ENCODE measurements at regions of chr16 and their contacts with region 1.

Region 1: DNA sequence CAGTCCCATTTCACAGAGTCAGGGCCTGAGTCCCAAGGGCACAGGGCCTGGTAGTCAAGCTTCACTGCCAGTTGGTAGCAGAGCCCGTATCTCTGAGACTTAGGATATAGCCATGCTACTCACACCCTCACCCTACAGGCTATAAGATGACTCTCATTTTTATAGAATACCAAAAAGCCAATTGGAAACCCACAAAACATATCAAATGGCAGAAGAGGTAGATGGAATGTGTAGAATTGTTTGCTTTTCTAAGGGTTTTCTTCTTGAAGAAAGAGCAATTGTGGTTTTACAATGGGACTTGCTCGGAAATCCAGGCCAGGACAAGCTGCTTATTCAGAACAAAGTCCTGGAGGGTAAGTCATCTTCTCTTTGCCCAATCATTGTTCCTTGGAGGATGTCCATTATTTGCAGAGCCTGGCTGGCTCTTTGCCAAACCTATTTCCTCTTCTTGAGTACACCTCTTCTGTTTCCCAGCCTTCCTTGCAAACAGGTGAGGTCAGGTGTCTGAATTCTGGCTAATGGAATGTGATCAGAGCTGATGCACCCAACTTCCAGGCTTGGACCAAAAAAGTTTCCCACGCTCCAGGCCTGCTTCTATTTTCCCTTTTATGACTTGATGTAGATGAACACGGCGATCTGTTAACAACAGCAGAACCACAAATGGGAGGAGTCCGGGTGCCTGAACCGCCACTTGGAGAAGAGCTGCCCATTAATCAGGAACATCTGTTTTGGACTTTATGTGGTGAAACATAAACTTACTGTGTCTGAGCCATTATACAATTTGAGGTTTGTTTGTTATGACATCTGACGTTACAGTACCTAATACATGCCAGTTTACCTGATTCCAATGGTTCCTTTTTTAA is 16.9 kb upstream of the CCL22 start:
- DNase-seq: peak; percentile 91
- H3K27ac ChIP-seq: peak overlapping the region; percentile 69
- CTCF ChIP-seq: no peak

Region 2: GRCh38 chr16:56389554-56389953 is 952.1 kb before region 1 on chr16:
- CTCF ChIA-PET with region 1: no interaction called
- POLR2A ChIA-PET with region 1: no interaction called
- DNase-seq: peak; percentile 25
- H3K27ac ChIP-seq: no peak overlapping the region
- CTCF ChIP-seq: no peak

Region 3: DNA sequence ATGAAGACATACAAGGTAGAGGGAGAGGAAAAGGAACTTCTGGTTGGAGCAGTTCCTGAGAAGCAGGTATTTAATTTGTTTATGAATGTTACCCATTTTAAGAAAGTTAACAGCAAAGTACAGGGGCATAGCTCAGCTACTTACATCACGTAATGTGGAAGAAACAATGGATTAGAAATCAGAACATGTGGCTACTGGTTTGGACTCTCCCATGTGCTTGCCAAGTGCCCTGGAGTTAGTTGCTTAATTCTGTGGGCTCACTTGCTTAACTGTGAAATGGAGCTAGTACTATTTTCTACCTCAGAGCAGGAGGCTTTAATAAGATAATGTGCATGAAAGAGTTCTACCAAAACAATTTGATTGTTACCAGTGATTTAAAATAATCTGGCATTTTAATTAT is 128.2 kb before region 1 on chr16:
- CTCF ChIA-PET with region 1: no interaction called
- POLR2A ChIA-PET with region 1: no interaction called
- DNase-seq: peak; percentile 59
- H3K27ac ChIP-seq: no peak overlapping the region
- CTCF ChIP-seq: no peak

Region 4: GRCh38 chr16:57289391-57290257 is 52.0 kb before region 1 on chr16:
- CTCF ChIA-PET with region 1: no interaction called
- POLR2A ChIA-PET with region 1: no interaction called
- DNase-seq: no peak
- H3K27ac ChIP-seq: peak overlapping the region; percentile 22
- CTCF ChIP-seq: no peak

Region 5: DNA sequence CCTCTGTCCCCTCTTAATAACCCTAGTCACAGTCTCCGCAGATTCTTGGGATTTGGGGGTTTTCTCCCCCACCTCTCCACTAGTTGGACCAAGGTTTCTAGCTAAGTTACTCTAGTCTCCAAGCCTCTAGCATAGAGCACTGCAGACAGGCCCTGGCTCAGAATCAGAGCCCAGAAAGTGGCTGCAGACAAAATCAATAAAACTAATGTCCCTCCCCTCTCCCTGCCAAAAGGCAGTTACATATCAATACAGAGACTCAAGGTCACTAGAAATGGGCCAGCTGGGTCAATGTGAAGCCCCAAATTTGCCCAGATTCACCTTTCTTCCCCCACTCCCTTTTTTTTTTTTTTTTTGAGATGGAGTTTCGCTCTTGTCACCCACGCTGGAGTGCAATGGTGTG is 22.5 kb after region 1 on chr16:
- CTCF ChIA-PET with region 1: interaction called, 10 read pairs
- POLR2A ChIA-PET with region 1: no interaction called
- DNase-seq: no peak
- H3K27ac ChIP-seq: no peak overlapping the region
- CTCF ChIP-seq: no peak

Region 6: DNA sequence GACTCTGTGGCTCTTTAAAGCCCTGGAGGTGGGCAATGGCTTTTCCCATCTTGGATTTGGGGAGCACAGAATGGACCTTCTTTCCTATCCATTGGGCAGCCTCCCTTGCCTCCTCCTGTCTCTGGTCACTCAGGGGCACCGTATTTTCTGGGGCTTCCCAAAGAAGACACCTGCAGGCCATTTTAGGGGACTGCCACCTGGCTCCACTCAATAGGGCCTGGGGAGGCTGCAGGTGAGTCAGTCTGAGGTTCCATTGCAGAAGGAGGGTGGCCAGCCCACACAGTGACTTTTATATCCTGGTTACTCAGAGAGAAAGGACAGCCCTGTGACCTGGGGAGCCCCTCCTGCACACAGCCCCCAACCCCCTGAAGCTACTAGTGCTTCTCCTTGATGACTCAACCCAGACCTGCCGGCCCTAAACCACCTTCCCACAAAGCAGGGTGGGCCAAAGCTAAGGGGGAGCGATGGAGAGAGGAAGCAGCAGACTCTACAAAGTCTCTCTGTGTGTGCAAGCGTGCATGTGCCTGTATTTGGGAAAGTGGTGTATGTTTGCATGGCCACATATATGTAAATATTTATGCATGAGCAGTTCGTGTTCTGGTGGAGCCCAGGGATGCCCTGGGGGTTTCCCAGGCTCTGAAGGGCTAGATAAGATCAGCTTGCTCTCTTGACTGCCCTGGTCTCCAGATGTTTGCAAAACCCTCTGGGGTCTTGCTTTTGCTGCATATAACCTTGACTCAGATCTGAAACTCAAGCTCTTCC is 35.6 kb after region 1 on chr16:
- CTCF ChIA-PET with region 1: no interaction called
- POLR2A ChIA-PET with region 1: no interaction called
- DNase-seq: peak; percentile 36
- H3K27ac ChIP-seq: peak overlapping the region; percentile 15
- CTCF ChIP-seq: no peak